ENCODE measurements at regions of chr18 and their contacts with region 1.

Region 1: GRCh38 chr18:34444622-34445021 is 219.9 kb upstream of the NOL4 start:
- DNase-seq: no peak
- ATAC-seq: no peak
- H3K4me3 ChIP-seq: no peak overlapping the region
- H3K27ac ChIP-seq: no peak overlapping the region
- H3K4me1 ChIP-seq: no peaks in the 10 kb centered on the region
- H3K27me3 ChIP-seq: no peaks in the 10 kb centered on the region
- CTCF ChIP-seq: no peak

Region 2: GRCh38 chr18:33946336-33946735 is 498.3 kb before region 1 on chr18:
- intact Hi-C with region 1: no loop called
- DNase-seq: no peak
- ATAC-seq: no peak
- H3K4me3 ChIP-seq: no peak overlapping the region
- H3K27ac ChIP-seq: no peak overlapping the region
- H3K4me1 ChIP-seq: no peaks in the 10 kb centered on the region
- H3K27me3 ChIP-seq: no peaks in the 10 kb centered on the region
- CTCF ChIP-seq: no peak

Region 3: GRCh38 chr18:34153711-34154110 is 290.9 kb before region 1 on chr18:
- intact Hi-C with region 1: no loop called
- DNase-seq: no peak
- ATAC-seq: no peak
- H3K4me3 ChIP-seq: peak overlapping the region in 1 of 10 donors; percentile 20
- H3K27ac ChIP-seq: no peak overlapping the region
- H3K4me1 ChIP-seq: peaks cover 0 to under 1% (median 0%) of the 10 kb centered on the region in 9 donors
- H3K27me3 ChIP-seq: peaks cover 0 to 27% (median 15%) of the 10 kb centered on the region in 7 donors
- CTCF ChIP-seq: no peak

Region 4: DNA sequence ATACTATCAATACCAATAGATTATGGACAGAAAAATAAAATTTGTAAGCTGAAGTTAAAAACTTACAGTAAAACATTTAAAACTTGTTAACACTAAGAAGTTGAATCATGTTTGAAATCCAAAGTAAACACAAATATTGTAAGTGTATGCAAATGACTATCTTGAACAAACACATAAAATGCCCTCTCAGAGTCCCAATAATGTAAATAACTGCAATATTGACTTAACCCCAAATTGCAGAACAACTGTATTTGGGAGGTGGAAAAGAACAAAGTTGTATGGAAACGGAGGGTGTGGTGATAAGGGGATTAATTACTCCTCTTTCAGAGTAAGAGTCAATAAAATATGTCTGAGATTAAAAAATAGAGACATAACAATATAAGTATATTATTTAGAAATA is 79.9 kb before region 1 on chr18:
- intact Hi-C with region 1: loop called in 1 of 10 experiments (anchors 10 kb)
- DNase-seq: no peak
- ATAC-seq: no peak
- H3K4me3 ChIP-seq: no peak overlapping the region
- H3K27ac ChIP-seq: no peak overlapping the region
- H3K4me1 ChIP-seq: no peaks in the 10 kb centered on the region
- H3K27me3 ChIP-seq: no peaks in the 10 kb centered on the region
- CTCF ChIP-seq: no peak